Common myeloid progenitor, CD34-positive (primary cell): ENCODE measurements at regions of chr3 and their contacts with region 1.

Region 1: GRCh38 chr3:46496741-46497554 is 828 bp upstream of the RTP3 start:
- DNase-seq: peak; percentile 43 to 63 (median 50)
- H3K4me3 ChIP-seq: no peak overlapping the region
- H3K27ac ChIP-seq: no peak overlapping the region
- H3K4me1 ChIP-seq: peaks cover 10 to 20% (median 11%) of the 10 kb centered on the region in 4 experiments
- H3K27me3 ChIP-seq: no peaks in the 10 kb centered on the region

Region 2: DNA sequence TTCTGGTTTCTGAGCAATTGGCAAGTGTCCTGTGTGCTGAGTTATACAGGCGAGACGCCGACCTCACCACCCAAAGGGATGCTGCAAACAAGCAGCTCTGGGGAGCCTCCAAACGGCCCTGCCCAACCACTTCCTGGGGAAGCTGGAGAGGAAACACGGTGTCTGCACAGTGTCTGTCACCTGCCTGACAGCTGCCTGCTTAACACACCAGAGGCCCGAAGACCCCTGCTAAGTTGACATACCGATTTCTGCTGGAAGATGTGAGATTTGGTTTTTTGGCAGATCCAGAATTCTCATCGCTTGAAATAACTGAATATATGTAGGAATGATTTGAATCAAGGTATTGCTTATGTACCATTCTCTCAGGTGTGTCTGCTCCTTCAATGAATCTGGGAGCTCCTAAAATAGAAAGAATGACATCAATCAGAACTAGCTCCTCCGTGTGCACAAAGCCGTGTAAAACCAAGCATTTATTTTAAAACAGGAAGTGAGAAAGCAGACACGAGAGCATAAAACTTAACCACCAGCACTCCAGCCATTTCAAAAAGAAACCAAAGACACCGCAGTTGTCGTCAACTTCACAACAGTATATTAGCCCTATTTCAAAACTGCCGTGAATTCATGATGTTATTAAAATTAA is 42.0 kb after region 1 on chr3:
- CTCF ChIA-PET with region 1: interaction called, 23 read pairs
- POLR2A ChIA-PET with region 1: interaction called, 6 read pairs
- DNase-seq: peak; percentile 79 to 95 (median 91)
- H3K4me3 ChIP-seq: peak overlapping the region in 6 of 7 experiments; percentile 29 to 70 (median 42)
- H3K27ac ChIP-seq: peak overlapping the region; percentile 19 to 65
- H3K4me1 ChIP-seq: peaks cover 17 to 43% (median 35%) of the 10 kb centered on the region in 4 experiments
- H3K27me3 ChIP-seq: no peaks in the 10 kb centered on the region

Region 3: GRCh38 chr3:46549408-46549904 is 52.5 kb after region 1 on chr3:
- CTCF ChIA-PET with region 1: interaction called, 20 read pairs
- POLR2A ChIA-PET with region 1: no interaction called
- DNase-seq: peak in 2 of 3 donors; percentile 58 to 77
- H3K4me3 ChIP-seq: peak overlapping the region in 1 of 7 experiments; percentile 33
- H3K27ac ChIP-seq: peak overlapping the region in 1 of 2 experiments; percentile 43
- H3K4me1 ChIP-seq: peaks cover 3 to 13% (median 7%) of the 10 kb centered on the region in 4 experiments
- H3K27me3 ChIP-seq: no peaks in the 10 kb centered on the region

Region 4: GRCh38 chr3:46558184-46559043 is 61.5 kb after region 1 on chr3:
- CTCF ChIA-PET with region 1: interaction called, 86 read pairs
- POLR2A ChIA-PET with region 1: no interaction called
- DNase-seq: peak; percentile 88 to 90 (median 89)
- H3K4me3 ChIP-seq: peak overlapping the region in 6 of 7 experiments; percentile 44 to 89 (median 68)
- H3K27ac ChIP-seq: no peak overlapping the region
- H3K4me1 ChIP-seq: peaks cover 0 to 8% (median 2%) of the 10 kb centered on the region in 4 experiments
- H3K27me3 ChIP-seq: no peaks in the 10 kb centered on the region

Region 5: DNA sequence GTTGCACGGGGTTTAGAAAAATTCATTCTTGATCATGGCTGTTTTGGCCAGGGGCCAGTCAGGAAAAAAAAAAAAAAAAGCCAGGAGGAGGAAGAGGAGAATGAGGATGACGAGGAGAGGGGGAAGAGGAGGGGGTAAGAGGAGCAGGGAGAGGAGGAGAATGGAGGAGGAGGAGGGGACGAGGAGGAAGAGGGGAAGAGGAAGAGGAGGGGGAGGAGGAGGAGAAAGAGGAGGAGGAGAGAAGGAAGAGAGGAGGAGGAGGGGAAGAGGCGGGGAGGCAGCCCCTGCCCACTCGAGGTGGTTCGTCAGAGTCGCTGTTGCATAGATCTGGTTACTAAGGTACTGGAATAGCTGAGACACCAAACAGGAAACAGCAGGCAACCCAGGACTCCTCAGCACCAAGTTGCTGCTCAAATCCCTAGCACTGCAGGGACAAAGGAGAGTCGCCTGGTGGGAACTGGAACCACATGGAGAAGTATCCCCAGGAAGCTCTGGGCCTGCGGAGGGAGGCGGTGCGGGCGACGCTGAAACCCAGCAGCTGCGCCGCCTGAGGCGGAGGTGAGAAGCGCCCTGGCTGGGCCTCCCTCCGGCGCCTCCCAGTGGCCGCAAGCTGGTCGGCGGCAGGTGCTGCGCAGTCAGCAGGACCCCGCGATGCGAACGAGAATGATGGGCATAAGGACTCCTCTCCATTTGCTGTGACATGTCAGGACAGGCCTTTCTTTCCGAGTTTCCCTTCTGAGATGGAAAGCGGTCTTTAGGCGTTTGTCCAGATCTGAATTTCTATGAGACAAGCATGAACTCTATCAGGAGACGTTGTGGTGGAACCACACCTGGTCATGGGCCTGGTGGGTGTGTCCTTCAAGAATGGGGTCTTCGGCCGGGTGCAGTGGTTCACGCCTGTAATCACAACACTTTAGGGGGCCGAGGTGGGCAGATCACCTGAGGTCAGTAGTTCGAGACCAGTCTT is 132.9 kb after region 1 on chr3:
- CTCF ChIA-PET with region 1: interaction called, 18 read pairs
- POLR2A ChIA-PET with region 1: no interaction called
- DNase-seq: peak; percentile 77 to 86 (median 85)
- H3K4me3 ChIP-seq: peak overlapping the region in 5 of 7 experiments; percentile 56 to 78 (median 70)
- H3K27ac ChIP-seq: peak overlapping the region in 1 of 2 experiments; percentile 44
- H3K4me1 ChIP-seq: peaks cover 0 to 12% (median 9%) of the 10 kb centered on the region in 4 experiments
- H3K27me3 ChIP-seq: no peaks in the 10 kb centered on the region